SK-N-SH (cell line): ENCODE measurements at regions of chr1 and their contacts with region 1.

Region 1: DNA sequence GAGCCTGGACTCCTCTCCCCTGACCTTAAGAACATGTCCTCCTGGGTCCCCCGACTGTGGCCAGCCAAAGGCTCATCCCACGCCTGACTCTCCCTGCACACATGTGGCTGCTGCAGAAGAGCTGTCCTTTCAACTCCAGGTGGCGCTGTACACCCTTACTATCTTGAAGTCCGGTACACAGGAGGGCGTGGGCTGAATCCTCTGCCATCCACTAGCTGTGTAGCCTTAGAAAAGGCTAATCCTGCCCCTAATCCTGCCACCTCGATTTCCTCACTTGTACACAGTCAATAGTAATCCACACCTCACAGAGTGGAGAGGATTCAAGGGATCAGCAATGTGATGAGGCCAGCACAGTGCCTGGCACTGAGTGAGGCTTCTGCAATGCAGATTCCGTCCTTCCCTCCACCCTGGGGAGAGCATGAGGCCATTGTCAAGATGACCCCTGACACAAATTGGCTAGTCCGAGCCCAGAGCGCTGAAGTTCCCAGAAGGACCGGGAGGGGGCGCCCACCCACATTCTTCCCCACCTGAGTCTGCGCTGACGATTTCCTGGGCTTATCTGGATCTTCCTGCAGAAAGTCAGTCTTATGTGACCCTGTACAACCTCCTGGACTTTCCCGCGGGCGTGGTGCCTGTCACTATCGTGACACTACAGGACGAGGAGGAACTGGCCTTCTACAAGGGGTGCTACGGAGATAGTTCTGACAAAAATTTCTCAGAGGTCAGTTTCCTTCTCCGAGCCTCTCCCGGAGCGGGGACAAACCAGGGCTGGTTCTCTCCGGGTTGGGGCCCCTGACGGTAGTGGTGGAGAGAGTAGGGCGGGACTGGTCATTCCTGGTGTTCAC is 47.1 kb upstream of the DMBX1 start:
- DNase-seq: peak; percentile 81
- H3K4me3 ChIP-seq: peak overlapping the region; percentile 49 to 55
- H3K27ac ChIP-seq: 0 out of 4 replicates have a peak overlapping the region, but pooled peaks of 1 of the 2 experiments have one; percentile 53
- H3K4me1 ChIP-seq: peaks cover 0 to 6% of the 10 kb centered on the region in 2 experiments; a peak in 1 of 4 replicates
- H3K27me3 ChIP-seq: peaks cover 4% of the 10 kb centered on the region; the same call in 1 of the 2 replicates
- CTCF ChIP-seq: peak; percentile 91
- EP300 ChIP-seq: no peak
- RAD21 ChIP-seq: peak; percentile 58

Region 2: DNA sequence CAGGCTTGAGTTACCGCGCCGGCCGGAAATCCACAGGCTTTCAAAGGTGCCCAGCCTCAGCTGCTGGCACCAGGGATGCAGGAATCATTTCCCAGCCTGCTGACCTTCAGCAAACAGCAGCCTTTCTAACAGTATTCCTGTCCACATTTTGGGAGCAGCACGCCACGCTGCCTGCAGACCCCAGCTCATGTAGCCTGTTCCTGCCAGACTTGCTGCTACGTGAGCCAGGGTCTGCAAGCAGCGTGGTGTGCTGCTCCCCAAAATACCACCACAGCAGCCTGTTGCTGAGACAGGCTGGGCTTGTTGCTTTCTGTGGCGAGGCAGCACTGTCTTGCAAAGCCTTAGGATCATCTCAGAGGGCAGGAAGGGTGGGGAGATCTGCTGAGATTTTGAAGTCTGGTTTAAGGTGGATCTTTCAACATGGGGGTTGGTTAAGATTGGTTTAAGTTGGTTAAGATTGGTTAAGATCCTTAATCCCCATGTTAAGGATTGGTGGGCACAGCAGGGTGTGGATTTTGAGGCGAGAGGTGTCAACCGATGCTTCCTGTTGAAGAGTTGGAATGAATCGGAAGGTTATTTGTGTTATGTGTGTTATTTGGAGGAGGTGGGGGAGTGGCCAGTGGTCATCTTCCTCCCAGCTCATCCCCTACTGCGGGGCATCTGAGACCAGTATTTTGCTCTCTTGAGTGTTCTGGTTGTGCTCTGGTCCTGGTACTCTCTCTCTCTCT is 35.5 kb before region 1 on chr1:
- CTCF ChIA-PET with region 1: interaction called, 19 read pairs
- POLR2A ChIA-PET with region 1: no interaction called
- DNase-seq: peak; percentile 52
- H3K4me3 ChIP-seq: peak overlapping the region in 1 of 2 experiments; percentile 42; a peak in 1 of 4 replicates
- H3K27ac ChIP-seq: no peak overlapping the region
- H3K4me1 ChIP-seq: no peaks in the 10 kb centered on the region; a peak in 1 of 4 replicates
- H3K27me3 ChIP-seq: no peaks in the 10 kb centered on the region
- CTCF ChIP-seq: no peak
- EP300 ChIP-seq: no peak
- RAD21 ChIP-seq: no peak

Region 3: DNA sequence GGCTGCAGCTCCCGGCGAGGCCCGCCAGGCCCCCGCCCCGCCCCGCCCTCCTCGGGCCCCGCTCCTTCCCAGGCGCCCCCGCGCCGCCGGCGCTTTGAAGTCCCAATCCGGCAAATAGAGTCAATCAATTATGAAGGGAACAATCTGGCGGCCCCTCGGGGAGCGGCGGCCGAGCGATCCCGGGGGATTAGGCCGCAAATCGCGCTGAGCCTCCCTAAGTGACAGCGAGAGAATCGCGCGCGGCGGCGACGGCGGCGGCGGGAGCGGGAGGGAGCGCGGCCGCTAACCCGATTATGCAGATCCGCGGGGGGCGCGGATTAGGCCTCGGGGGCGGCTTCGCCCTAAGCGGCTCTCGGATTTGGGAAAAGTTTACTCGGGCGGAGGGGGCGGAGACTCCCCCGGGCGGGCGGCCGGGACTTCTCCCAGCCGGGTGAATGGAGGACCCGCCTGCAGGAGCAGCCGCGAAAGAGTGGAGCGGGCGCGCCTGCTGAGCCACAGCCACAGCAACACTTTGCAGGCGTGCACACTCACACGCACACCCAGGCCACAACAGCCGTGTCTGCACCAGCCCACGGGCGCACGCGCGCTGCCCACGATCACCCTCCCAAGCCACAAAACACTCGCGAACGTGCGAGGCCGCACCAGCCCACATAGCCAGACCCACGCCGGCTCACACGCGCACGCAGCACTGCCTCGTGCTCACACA is 24.1 kb after region 1 on chr1:
- CTCF ChIA-PET with region 1: interaction called, 99 read pairs
- POLR2A ChIA-PET with region 1: no interaction called
- DNase-seq: peak; percentile 81
- H3K4me3 ChIP-seq: peak overlapping the region; percentile 43 to 56
- H3K27ac ChIP-seq: no peak overlapping the region
- H3K4me1 ChIP-seq: peaks cover 0 to 14% of the 10 kb centered on the region in 2 experiments; a peak in 1 of 4 replicates
- H3K27me3 ChIP-seq: no peaks in the 10 kb centered on the region
- CTCF ChIP-seq: no peak
- EP300 ChIP-seq: no peak
- RAD21 ChIP-seq: no peak

Region 4: GRCh38 chr1:46503421-46503820 is 60.9 kb after region 1 on chr1:
- CTCF ChIA-PET with region 1: interaction called, 13 read pairs
- POLR2A ChIA-PET with region 1: no interaction called
- DNase-seq: no peak
- H3K4me3 ChIP-seq: no peak overlapping the region
- H3K27ac ChIP-seq: no peak overlapping the region
- H3K4me1 ChIP-seq: no peaks in the 10 kb centered on the region
- H3K27me3 ChIP-seq: no peaks in the 10 kb centered on the region; the same call in 1 of the 2 replicates
- CTCF ChIP-seq: no peak
- EP300 ChIP-seq: no peak
- RAD21 ChIP-seq: no peak

Region 5: DNA sequence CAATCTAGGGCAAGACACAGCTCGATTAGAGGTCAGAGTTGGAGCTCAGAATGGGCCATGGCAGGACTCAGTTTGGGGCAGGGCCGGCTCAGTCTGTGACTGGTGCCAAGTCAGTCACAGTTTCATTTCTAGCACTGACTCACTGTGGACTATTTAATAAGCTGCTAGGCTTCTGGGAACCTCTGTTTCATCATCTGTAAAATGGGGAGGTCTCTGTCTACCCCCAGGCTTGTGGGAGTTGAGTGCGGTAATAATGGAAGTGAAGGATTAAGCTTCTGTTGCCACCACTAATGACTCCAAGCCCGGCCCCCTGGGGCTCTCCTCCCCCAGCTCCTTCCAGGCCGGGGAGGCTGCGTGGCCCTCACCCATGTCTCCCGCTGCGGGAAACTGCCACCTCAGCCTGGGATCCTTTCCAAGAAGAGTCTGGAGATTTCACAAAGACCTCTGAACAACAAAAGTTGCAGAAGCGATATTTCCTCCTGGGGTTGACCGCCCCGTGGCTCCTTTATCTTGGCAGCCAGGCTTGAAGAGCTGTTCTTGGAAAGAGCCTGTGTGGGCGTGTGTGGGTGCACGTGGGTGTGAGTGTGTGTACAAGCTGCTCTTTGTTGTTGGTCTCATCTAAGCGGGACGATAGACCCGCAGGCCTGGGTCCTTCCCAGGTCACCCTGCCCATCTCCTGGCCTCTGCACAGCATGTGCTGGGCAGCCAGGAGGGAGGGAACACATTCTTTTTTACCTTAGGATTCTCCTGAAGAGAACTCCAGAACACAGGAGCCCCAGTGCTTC is 79.8 kb after region 1 on chr1:
- CTCF ChIA-PET with region 1: interaction called, 496 read pairs
- POLR2A ChIA-PET with region 1: no interaction called
- DNase-seq: no peak
- H3K4me3 ChIP-seq: no peak overlapping the region
- H3K27ac ChIP-seq: peak overlapping the region in 1 of 2 experiments; percentile 49; a peak in 2 of 4 replicates
- H3K4me1 ChIP-seq: peaks cover 4 to 39% of the 10 kb centered on the region in 2 experiments; a peak in 3 of 4 replicates
- H3K27me3 ChIP-seq: no peaks in the 10 kb centered on the region
- CTCF ChIP-seq: no peak
- EP300 ChIP-seq: no peak
- RAD21 ChIP-seq: no peak

Region 6: DNA sequence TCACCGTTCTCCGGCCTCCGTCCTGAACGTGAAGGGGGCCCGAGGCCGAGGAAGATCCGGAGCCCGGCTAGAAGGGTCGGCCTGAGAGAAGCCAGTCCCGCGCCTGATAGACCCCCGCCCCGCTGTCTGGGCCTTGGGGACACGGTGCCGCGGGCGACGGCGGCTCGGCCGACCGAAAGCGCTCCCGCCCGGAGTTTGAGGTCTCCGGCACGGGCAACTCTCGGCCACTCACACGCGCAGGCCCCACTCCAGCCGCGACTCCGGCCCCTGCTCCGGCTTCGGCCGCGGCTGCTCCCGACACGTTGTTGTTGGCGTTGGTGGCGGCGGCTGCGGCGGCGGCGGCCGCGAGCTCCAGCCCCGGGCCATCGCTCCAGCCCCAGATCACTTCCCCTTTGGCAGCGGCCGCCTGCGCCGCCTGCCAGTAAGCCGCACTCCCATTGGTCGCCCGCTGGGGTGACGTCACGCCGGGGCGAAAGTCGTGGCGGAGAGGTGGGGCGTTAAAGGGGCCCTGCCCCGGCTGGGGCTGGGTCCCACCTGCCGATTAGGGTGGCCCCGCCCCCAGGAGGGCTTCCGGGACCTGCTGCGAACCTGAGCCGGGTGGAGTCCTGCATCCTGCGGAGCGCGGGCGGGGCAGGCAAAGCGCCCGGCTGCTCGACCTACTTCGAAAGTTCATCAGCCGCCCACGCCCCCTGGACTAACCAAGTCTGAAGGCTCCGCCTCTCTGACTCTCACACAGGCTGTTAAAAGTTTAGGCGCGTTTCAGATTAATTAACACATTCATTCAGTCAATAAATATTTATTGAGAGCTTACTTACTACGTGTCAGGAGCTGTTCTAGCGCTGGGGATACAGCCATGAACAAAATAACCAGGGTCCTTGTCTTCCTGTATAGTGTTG is 276.4 kb after region 1 on chr1 and contains the start of gene EFCAB14:
- CTCF ChIA-PET with region 1: interaction called, 25 read pairs
- POLR2A ChIA-PET with region 1: no interaction called
- DNase-seq: peak; percentile 98
- H3K4me3 ChIP-seq: peak within 1 kb of the TSS; percentile 86 to 98
- H3K27ac ChIP-seq: peak within 1 kb of the TSS; percentile 50 to 62; a peak in 2 of 4 replicates
- H3K4me1 ChIP-seq: peaks cover 15 to 17% of the 10 kb centered on the region in 2 experiments
- H3K27me3 ChIP-seq: no peaks in the 10 kb centered on the region
- CTCF ChIP-seq: no peak
- EP300 ChIP-seq: 0 out of 4 replicates have a peak, but pooled peaks of 1 of the 2 experiments have one; percentile 42
- RAD21 ChIP-seq: no peak
- polyA plus RNA-seq, gene EFCAB14: 13.6 and 20.0 TPM in 2 replicates